GM12878 (cell line): ENCODE measurements at regions of chr1 and their contacts with region 1.

Region 1: GRCh38 chr1:222455188-222455879 is 92.6 kb downstream of the HHIPL2 start:
- DNase-seq: peak; percentile 43
- ATAC-seq: peak; percentile 100
- H3K4me3 ChIP-seq: no peak overlapping the region
- H3K27ac ChIP-seq: no peak overlapping the region
- H3K4me1 ChIP-seq: no peaks in the 10 kb centered on the region
- H3K27me3 ChIP-seq: no peaks in the 10 kb centered on the region
- CTCF ChIP-seq: peak; percentile 91 to 97 (median 97)
- EP300 ChIP-seq: no peak
- POLR2A ChIP-seq: no peak
- RAD21 ChIP-seq: peak; percentile 93

Region 2: GRCh38 chr1:220873868-220874655 is 1581.3 kb before region 1 on chr1:
- CTCF ChIA-PET with region 1: interaction called, 5 read pairs
- POLR2A ChIA-PET with region 1: no interaction called
- RAD21 ChIA-PET with region 1: no interaction called
- SMC1A ChIA-PET with region 1: no interaction called
- in situ Hi-C with region 1: no loop called
- intact Hi-C with region 1: loop called (anchors 2 kb)
- DNase-seq: no peak
- ATAC-seq: peak; percentile 47
- H3K4me3 ChIP-seq: no peak overlapping the region
- H3K27ac ChIP-seq: no peak overlapping the region
- H3K4me1 ChIP-seq: peaks cover 10% of the 10 kb centered on the region
- H3K27me3 ChIP-seq: 0 out of 4 replicates have a peak, but pooled peaks cover 0 to 4% of the 10 kb centered on the region in 2 experiments
- CTCF ChIP-seq: peak; percentile 60 to 79 (median 65); a peak in 5 of 6 replicates
- EP300 ChIP-seq: no peak
- POLR2A ChIP-seq: no peak
- RAD21 ChIP-seq: peak; percentile 82

Region 3: GRCh38 chr1:221435504-221435904 is 1019.8 kb before region 1 on chr1:
- CTCF ChIA-PET with region 1: interaction called, 19 read pairs
- POLR2A ChIA-PET with region 1: no interaction called
- RAD21 ChIA-PET with region 1: interaction called, 5 read pairs
- SMC1A ChIA-PET with region 1: interaction called, 8 read pairs
- in situ Hi-C with region 1: no loop called
- intact Hi-C with region 1: loop called (anchors 10 kb)
- DNase-seq: no peak
- ATAC-seq: peak; percentile 55
- H3K4me3 ChIP-seq: no peak overlapping the region
- H3K27ac ChIP-seq: no peak overlapping the region
- H3K4me1 ChIP-seq: 0 out of 2 replicates have a peak, but pooled peaks cover 4% of the 10 kb centered on the region
- H3K27me3 ChIP-seq: no peaks in the 10 kb centered on the region
- CTCF ChIP-seq: peak; percentile 78 to 90 (median 80)
- EP300 ChIP-seq: no peak
- POLR2A ChIP-seq: no peak
- RAD21 ChIP-seq: peak; percentile 88

Region 4: DNA sequence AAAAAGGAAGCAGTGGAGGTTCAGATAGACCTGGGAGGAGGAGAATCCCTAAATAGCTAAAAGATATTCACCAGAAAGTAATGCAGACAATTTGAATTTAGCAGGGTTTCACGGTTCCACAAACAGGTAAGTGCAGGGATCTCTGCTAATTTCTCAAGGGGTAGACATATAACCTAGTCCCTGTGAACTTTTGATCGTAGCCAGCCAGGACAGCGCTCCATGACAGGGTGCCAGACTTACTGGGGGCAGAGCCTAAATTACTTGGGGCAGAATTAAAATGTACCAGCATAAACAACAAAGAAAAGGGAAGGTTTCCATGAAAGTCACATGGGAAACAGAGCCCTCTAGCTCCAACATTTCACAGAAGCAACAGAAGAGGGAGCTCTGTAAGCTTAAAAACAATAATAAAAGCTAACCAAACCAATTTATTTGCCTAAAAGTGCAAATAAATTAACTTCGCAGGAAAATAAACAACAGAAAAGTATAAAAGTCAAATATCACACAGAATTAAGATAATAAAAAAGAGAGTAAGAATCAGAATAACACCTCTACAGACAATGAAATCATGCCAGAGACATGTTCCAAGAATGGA is 911.7 kb before region 1 on chr1:
- CTCF ChIA-PET with region 1: interaction called, 14 read pairs
- POLR2A ChIA-PET with region 1: no interaction called
- RAD21 ChIA-PET with region 1: no interaction called
- SMC1A ChIA-PET with region 1: interaction called, 9 read pairs
- in situ Hi-C with region 1: no loop called
- intact Hi-C with region 1: loop called (anchors 5 kb)
- DNase-seq: no peak
- ATAC-seq: peak; percentile 64
- H3K4me3 ChIP-seq: no peak overlapping the region
- H3K27ac ChIP-seq: no peak overlapping the region
- H3K4me1 ChIP-seq: no peaks in the 10 kb centered on the region
- H3K27me3 ChIP-seq: no peaks in the 10 kb centered on the region
- CTCF ChIP-seq: peak; percentile 39 to 57 (median 53); a peak in 5 of 6 replicates
- EP300 ChIP-seq: no peak
- POLR2A ChIP-seq: no peak
- RAD21 ChIP-seq: peak; percentile 66

Region 5: GRCh38 chr1:222105393-222105737 is 350.0 kb before region 1 on chr1:
- CTCF ChIA-PET with region 1: no interaction called
- POLR2A ChIA-PET with region 1: no interaction called
- RAD21 ChIA-PET with region 1: no interaction called
- SMC1A ChIA-PET with region 1: no interaction called
- in situ Hi-C with region 1: loop called (anchors 10 kb)
- intact Hi-C with region 1: no loop called
- DNase-seq: no peak
- ATAC-seq: peak; percentile 72
- H3K4me3 ChIP-seq: no peak overlapping the region
- H3K27ac ChIP-seq: no peak overlapping the region
- H3K4me1 ChIP-seq: no peaks in the 10 kb centered on the region
- H3K27me3 ChIP-seq: no peaks in the 10 kb centered on the region
- CTCF ChIP-seq: peak in 1 of 3 experiments; percentile 23; a peak in 1 of 6 replicates
- EP300 ChIP-seq: no peak
- POLR2A ChIP-seq: no peak
- RAD21 ChIP-seq: no peak

Region 6: GRCh38 chr1:222441066-222441465 is 14.3 kb before region 1 on chr1:
- CTCF ChIA-PET with region 1: interaction called, 18 read pairs
- POLR2A ChIA-PET with region 1: no interaction called
- RAD21 ChIA-PET with region 1: no interaction called
- SMC1A ChIA-PET with region 1: interaction called, 4 read pairs
- in situ Hi-C with region 1: no loop called
- intact Hi-C with region 1: no loop called
- DNase-seq: no peak
- ATAC-seq: no peak
- H3K4me3 ChIP-seq: no peak overlapping the region
- H3K27ac ChIP-seq: no peak overlapping the region
- H3K4me1 ChIP-seq: no peaks in the 10 kb centered on the region
- H3K27me3 ChIP-seq: no peaks in the 10 kb centered on the region; a peak in 1 of 4 replicates
- CTCF ChIP-seq: no peak
- EP300 ChIP-seq: no peak
- POLR2A ChIP-seq: no peak
- RAD21 ChIP-seq: no peak

Region 7: DNA sequence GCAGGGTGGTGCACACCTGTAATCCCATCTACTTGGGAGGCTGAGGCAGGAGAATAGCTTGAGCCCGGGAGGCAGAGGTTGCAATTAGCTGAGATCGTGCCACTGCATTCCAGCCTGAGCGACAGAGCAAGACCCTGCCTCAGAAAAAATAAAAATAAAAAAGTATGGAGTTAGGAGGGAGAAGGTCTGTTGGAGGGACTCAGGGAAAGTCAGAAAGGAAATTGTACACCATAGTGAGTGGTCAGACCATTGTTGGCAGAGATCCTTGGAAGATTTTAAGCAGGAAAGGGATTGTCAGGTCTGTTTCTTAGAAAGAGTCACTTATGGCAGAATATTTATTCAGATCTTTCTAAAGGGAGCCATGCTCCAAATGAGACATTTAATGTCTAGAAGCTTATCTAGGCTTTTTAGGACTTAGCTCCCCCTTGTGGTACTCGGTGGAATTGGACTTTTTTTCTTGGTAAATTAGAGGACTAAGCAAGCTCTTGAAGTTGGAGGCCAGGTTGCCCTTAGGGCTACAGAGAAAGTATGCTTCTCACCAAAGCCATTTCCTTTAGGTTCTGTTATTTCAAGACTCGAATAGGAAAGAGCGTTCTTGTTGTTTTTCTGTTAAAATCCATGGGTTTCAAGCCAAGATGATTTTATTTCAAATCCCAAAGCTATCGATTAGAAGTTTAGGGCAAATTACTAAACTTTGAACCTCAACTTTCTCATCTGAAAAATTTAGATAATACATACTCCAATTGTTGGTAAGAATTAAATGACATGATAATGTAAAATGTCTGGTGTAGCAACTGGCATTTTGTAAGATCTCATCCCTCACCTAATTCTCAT is 179.1 kb after region 1 on chr1:
- CTCF ChIA-PET with region 1: interaction called, 119 read pairs
- POLR2A ChIA-PET with region 1: no interaction called
- RAD21 ChIA-PET with region 1: no interaction called
- SMC1A ChIA-PET with region 1: interaction called, 7 read pairs
- in situ Hi-C with region 1: loop called (anchors 5 kb)
- intact Hi-C with region 1: no loop called
- DNase-seq: no peak
- ATAC-seq: peak; percentile 95
- H3K4me3 ChIP-seq: no peak overlapping the region
- H3K27ac ChIP-seq: no peak overlapping the region
- H3K4me1 ChIP-seq: no peaks in the 10 kb centered on the region
- H3K27me3 ChIP-seq: no peaks in the 10 kb centered on the region
- CTCF ChIP-seq: peak; percentile 77 to 90 (median 85)
- EP300 ChIP-seq: no peak
- POLR2A ChIP-seq: no peak
- RAD21 ChIP-seq: peak; percentile 90